ENCODE measurements at regions of chr3 and their contacts with region 1.

Region 1: GRCh38 chr3:111338059-111338698 is 203.8 kb upstream of the CD96 start:
- DNase-seq: peak; percentile 63
- ATAC-seq: no peak
- H3K4me3 Mint-ChIP-seq: no peak overlapping the region
- H3K27ac Mint-ChIP-seq: no peak overlapping the region
- H3K4me1 Mint-ChIP-seq: peaks cover 13% of the 10 kb centered on the region
- H3K27me3 Mint-ChIP-seq: no peaks in the 10 kb centered on the region

Region 2: GRCh38 chr3:111012388-111013248 is 325.6 kb before region 1 on chr3:
- CTCF ChIA-PET with region 1: no interaction called
- POLR2A ChIA-PET with region 1: no interaction called
- intact Hi-C with region 1: loop called in 1 of 2 experiments (anchors 10 kb)
- DNase-seq: peak; percentile 25
- ATAC-seq: no peak
- H3K4me3 Mint-ChIP-seq: no peak overlapping the region
- H3K27ac Mint-ChIP-seq: no peak overlapping the region
- H3K4me1 Mint-ChIP-seq: no peaks in the 10 kb centered on the region
- H3K27me3 Mint-ChIP-seq: peaks cover 2% of the 10 kb centered on the region

Region 3: GRCh38 chr3:111071257-111072015 is 266.7 kb before region 1 on chr3 and contains the start of gene NECTIN3:
- CTCF ChIA-PET with region 1: no interaction called
- POLR2A ChIA-PET with region 1: no interaction called
- intact Hi-C with region 1: loop called (anchors 1 to 5 kb)
- DNase-seq: peak; percentile 91
- ATAC-seq: peak; percentile 95
- H3K4me3 Mint-ChIP-seq: peak within 1 kb of the TSS; percentile 83
- H3K27ac Mint-ChIP-seq: peak within 1 kb of the TSS; percentile 80
- H3K4me1 Mint-ChIP-seq: peaks cover 28% of the 10 kb centered on the region
- H3K27me3 Mint-ChIP-seq: peaks cover 40% of the 10 kb centered on the region
- total RNA-seq, gene NECTIN3: 5.1 to 5.9 TPM

Region 4: DNA sequence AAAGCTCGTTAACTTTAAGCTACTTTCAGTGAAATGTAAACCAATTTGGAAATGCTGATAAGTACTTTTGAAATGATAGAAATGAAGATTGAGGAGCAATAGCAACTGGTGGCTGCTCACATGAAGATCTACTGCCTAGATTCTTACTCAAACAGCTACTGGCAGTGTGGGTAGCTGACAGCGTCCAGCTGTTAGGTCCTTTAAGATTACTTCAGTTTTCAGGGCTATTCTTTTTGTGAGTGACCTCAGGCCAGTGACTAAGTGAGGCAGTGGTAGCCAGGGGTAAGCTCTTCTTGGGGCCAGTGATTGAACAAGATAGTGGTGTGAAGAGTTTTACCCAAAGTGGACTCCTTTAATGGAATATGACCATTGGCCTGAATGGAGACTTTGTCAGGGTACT is 225.3 kb before region 1 on chr3:
- CTCF ChIA-PET with region 1: no interaction called
- POLR2A ChIA-PET with region 1: no interaction called
- intact Hi-C with region 1: no loop called
- DNase-seq: no peak
- ATAC-seq: no peak
- H3K4me3 Mint-ChIP-seq: no peak overlapping the region
- H3K27ac Mint-ChIP-seq: no peak overlapping the region
- H3K4me1 Mint-ChIP-seq: no peaks in the 10 kb centered on the region
- H3K27me3 Mint-ChIP-seq: no peaks in the 10 kb centered on the region

Region 5: DNA sequence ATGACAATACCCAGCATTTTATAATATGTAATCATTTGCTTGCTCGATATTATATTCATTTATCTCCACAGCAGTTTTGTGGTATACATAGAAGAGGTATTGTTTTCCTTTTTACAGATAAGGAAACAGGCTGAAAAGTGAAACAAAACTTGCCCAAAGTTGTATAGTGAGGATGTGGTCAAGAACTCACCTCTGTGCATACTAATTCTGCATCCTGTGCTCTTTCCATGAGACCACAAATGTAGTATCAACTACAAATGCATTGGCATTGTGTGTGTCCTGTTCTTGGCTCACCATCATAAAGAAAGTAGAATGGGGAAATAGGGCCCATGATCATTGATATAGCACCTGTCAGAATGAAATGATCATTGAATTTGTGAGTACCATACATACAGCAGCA is 99.3 kb before region 1 on chr3:
- CTCF ChIA-PET with region 1: no interaction called
- POLR2A ChIA-PET with region 1: no interaction called
- intact Hi-C with region 1: loop called in 1 of 2 experiments (anchors 10 kb)
- DNase-seq: no peak
- ATAC-seq: peak; percentile 94
- H3K4me3 Mint-ChIP-seq: no peak overlapping the region
- H3K27ac Mint-ChIP-seq: no peak overlapping the region
- H3K4me1 Mint-ChIP-seq: peaks cover 15% of the 10 kb centered on the region
- H3K27me3 Mint-ChIP-seq: no peaks in the 10 kb centered on the region

Region 6: GRCh38 chr3:111506435-111506834 is 168.3 kb after region 1 on chr3:
- CTCF ChIA-PET with region 1: no interaction called
- POLR2A ChIA-PET with region 1: no interaction called
- intact Hi-C with region 1: no loop called
- DNase-seq: no peak
- ATAC-seq: no peak
- H3K4me3 Mint-ChIP-seq: no peak overlapping the region
- H3K27ac Mint-ChIP-seq: no peak overlapping the region
- H3K4me1 Mint-ChIP-seq: no peaks in the 10 kb centered on the region
- H3K27me3 Mint-ChIP-seq: no peaks in the 10 kb centered on the region